PC-9 (cell line): ENCODE measurements at regions of chr2 and their contacts with region 1.

Region 1: GRCh38 chr2:173965329-173966025 is at the start of gene SP3:
- DNase-seq: peak; percentile 97 to 99
- H3K4me3 ChIP-seq: peak within 1 kb of the TSS; percentile 70
- H3K27ac ChIP-seq: peak within 1 kb of the TSS; percentile 85
- H3K4me1 ChIP-seq: peaks cover 43% of the 10 kb centered on the region
- H3K27me3 ChIP-seq: no peaks in the 10 kb centered on the region
- CTCF ChIP-seq: no peak
- total RNA-seq, gene SP3: 93.6 and 127 TPM in 2 replicates

Region 2: DNA sequence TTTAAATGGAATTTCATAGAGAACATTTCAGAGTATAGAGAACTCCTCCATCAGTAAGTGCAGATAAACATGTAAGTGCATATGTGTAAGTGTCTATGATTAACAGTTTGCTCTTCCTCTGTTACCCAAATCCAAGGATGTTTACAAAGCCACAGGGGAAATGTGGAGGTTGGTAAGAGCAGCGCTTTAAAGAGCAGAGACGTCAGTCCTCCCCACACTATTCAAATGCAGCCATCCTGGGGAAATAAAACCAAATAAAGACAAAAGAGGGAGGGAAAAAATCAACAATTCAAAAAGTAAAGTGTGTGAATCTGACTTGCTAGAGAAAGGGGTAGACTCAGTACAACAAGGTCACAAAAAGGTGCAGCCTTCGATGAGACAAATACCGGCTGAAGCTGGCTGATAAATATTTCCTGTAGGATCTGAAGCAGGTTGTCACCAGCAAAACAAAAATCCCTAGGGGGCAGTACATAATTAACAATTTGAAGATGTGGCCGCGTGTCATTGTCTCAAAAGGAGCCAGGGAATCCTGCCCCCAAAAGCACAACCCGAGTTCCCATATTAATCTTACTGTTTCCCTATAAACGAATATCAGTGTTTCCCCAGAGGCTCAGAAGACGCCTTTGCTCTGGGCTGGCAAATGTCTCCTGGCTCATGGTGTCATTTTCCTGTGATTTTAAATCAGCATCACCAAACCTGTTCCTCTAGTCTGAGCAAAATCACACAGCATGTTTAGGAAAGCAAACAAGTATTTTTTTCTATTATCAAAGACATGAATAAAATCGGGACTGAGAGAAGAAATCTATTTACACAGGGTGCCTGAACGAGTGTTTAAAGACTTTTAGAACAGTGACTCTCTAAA is 394.2 kb before region 1 on chr2:
- CTCF ChIA-PET with region 1: no interaction called
- POLR2A ChIA-PET with region 1: no interaction called
- intact Hi-C with region 1: loop called (anchors 2 kb)
- DNase-seq: peak; percentile 59 to 87
- H3K4me3 ChIP-seq: peak overlapping the region; percentile 22; the same call in 1 of the 2 replicates
- H3K27ac ChIP-seq: peak overlapping the region; percentile 58
- H3K4me1 ChIP-seq: peaks cover 30% of the 10 kb centered on the region
- H3K27me3 ChIP-seq: peaks cover 5% of the 10 kb centered on the region; the same call in 1 of the 2 replicates
- CTCF ChIP-seq: peak; percentile 75

Region 3: GRCh38 chr2:173934895-173935294 is 30.6 kb before region 1 on chr2:
- CTCF ChIA-PET with region 1: no interaction called
- POLR2A ChIA-PET with region 1: no interaction called
- intact Hi-C with region 1: loop called (anchors 2 kb)
- DNase-seq: peak; percentile 48 to 58
- H3K4me3 ChIP-seq: no peak overlapping the region
- H3K27ac ChIP-seq: 0 out of 2 replicates have a peak overlapping the region, but pooled peaks have one; percentile 9
- H3K4me1 ChIP-seq: peaks cover 28% of the 10 kb centered on the region
- H3K27me3 ChIP-seq: no peaks in the 10 kb centered on the region
- CTCF ChIP-seq: no peak

Region 4: GRCh38 chr2:174039551-174040416 is 74.3 kb after region 1 on chr2:
- CTCF ChIA-PET with region 1: no interaction called
- POLR2A ChIA-PET with region 1: no interaction called
- intact Hi-C with region 1: loop called (anchors 1 kb)
- DNase-seq: peak; percentile 90 to 94
- H3K4me3 ChIP-seq: no peak overlapping the region
- H3K27ac ChIP-seq: peak overlapping the region; percentile 43
- H3K4me1 ChIP-seq: peaks cover 5% of the 10 kb centered on the region
- H3K27me3 ChIP-seq: no peaks in the 10 kb centered on the region
- CTCF ChIP-seq: peak; percentile 98

Region 5: GRCh38 chr2:174117951-174118930 is 152.8 kb after region 1 on chr2:
- CTCF ChIA-PET with region 1: no interaction called
- POLR2A ChIA-PET with region 1: no interaction called
- intact Hi-C with region 1: loop called (anchors 5 kb)
- DNase-seq: peak; percentile 41 to 83
- H3K4me3 ChIP-seq: 0 out of 2 replicates have a peak overlapping the region, but pooled peaks have one; percentile 1
- H3K27ac ChIP-seq: peak overlapping the region; percentile 66
- H3K4me1 ChIP-seq: peaks cover 62% of the 10 kb centered on the region
- H3K27me3 ChIP-seq: no peaks in the 10 kb centered on the region
- CTCF ChIP-seq: no peak